ENCODE measurements at regions of chr20 and their contacts with region 1.

Region 1: DNA sequence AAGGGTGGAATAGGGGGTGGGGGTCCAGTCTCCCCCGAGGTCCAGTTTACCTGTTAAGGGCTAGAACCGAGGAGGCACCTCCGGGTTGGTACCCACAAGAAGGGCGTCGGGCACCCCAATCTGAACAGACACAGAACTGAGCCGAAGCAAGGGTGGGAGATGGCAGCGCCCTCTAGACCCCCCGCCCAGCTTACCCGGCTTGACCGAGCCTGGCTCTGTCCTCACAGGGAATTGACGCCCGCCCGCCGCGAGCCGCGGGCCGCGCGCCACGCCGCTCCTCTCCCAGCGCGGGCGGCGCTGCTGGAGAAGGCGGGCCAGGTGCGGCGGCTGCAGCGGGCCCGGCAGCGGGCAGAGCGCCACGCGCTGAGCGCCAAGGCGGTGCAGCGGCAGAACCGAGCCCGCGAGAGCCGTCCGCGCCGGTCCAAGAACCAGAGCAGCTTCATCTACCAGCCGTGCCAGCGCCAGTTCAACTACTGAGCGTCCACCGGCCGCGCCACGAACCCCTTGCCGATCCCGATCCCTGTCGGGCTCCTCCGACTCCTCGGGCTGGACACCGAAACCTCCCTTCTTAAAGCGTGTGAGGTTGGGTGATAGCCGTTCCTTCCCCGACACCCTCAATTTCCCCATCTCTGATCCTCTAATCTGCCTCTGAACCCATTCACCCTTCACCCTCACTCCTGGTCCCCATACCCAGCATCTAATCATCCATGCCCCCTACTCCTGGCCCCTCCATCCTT is 5.9 kb downstream of the TP53INP2 start:
- DNase-seq: no peak
- H3K4me3 ChIP-seq: peak overlapping the region; percentile 39 to 74 (median 55)
- H3K27ac ChIP-seq: no peak overlapping the region
- H3K4me1 ChIP-seq: peaks cover 40% of the 10 kb centered on the region
- H3K27me3 ChIP-seq: no peaks in the 10 kb centered on the region
- CTCF ChIP-seq: peak in 1 of 2 donors; percentile 29

Region 2: GRCh38 chr20:34260208-34260942 is 449.6 kb before region 1 on chr20:
- CTCF ChIA-PET with region 1: no interaction called
- dilution Hi-C with region 1: no loop called
- in situ Hi-C with region 1: no loop called
- intact Hi-C with region 1: loop called (anchors 1 kb)
- DNase-seq: no peak
- H3K4me3 ChIP-seq: no peak overlapping the region
- H3K27ac ChIP-seq: no peak overlapping the region
- H3K4me1 ChIP-seq: no peaks in the 10 kb centered on the region
- H3K27me3 ChIP-seq: no peaks in the 10 kb centered on the region
- CTCF ChIP-seq: no peak

Region 3: GRCh38 chr20:34538671-34539123 is 171.3 kb before region 1 on chr20:
- CTCF ChIA-PET with region 1: no interaction called
- dilution Hi-C with region 1: loop called (anchors 5 kb)
- in situ Hi-C with region 1: no loop called
- intact Hi-C with region 1: loop called (anchors 1 kb)
- DNase-seq: peak; percentile 32
- H3K4me3 ChIP-seq: no peak overlapping the region
- H3K27ac ChIP-seq: no peak overlapping the region
- H3K4me1 ChIP-seq: no peaks in the 10 kb centered on the region
- H3K27me3 ChIP-seq: no peaks in the 10 kb centered on the region
- CTCF ChIP-seq: peak; percentile 86 to 88

Region 4: GRCh38 chr20:34579191-34579978 is 130.6 kb before region 1 on chr20:
- CTCF ChIA-PET with region 1: interaction called, 4 read pairs
- dilution Hi-C with region 1: no loop called
- in situ Hi-C with region 1: loop called (anchors 5 to 10 kb)
- intact Hi-C with region 1: loop called (anchors 1 kb)
- DNase-seq: peak; percentile 94
- H3K4me3 ChIP-seq: no peak overlapping the region
- H3K27ac ChIP-seq: peak overlapping the region; percentile 10
- H3K4me1 ChIP-seq: peaks cover 30% of the 10 kb centered on the region
- H3K27me3 ChIP-seq: no peaks in the 10 kb centered on the region
- CTCF ChIP-seq: peak; percentile 92

Region 5: DNA sequence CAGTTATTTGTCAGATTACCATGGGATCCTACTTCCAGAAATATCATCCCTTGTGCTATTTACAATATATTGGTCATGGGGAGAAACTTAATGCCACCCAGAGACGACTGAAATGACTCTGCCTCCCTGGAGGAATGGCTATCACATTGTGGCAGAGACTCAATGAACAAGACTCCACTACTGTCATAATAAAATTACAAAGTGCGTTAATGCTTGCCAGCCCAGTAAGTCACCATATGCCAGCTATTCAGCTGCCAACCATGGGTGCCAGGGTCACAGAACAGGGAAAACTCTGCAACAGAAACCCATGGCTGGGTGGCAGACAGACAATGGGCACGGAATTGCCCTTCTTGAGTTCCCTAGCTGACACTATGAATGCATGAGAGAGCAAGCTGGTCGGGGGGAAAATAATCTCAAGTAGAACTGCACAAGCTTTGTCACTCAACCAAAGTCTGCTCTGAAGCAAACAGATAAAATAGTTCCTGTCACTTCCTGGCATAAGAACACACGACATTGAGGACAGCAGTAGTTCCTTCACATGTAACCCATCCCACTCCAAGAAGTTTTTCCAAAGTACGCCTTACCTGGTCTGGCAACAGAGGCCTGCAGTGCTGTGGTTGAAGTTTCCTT is 26.2 kb after region 1 on chr20:
- CTCF ChIA-PET with region 1: no interaction called
- dilution Hi-C with region 1: no loop called
- in situ Hi-C with region 1: no loop called
- intact Hi-C with region 1: no loop called
- DNase-seq: no peak
- H3K4me3 ChIP-seq: no peak overlapping the region
- H3K27ac ChIP-seq: no peak overlapping the region
- H3K4me1 ChIP-seq: no peaks in the 10 kb centered on the region
- H3K27me3 ChIP-seq: no peaks in the 10 kb centered on the region
- CTCF ChIP-seq: no peak

Region 6: GRCh38 chr20:34781220-34781619 is 71.2 kb after region 1 on chr20:
- CTCF ChIA-PET with region 1: no interaction called
- dilution Hi-C with region 1: loop called (anchors 5 kb)
- in situ Hi-C with region 1: no loop called
- intact Hi-C with region 1: no loop called
- DNase-seq: no peak
- H3K4me3 ChIP-seq: no peak overlapping the region
- H3K27ac ChIP-seq: no peak overlapping the region
- H3K4me1 ChIP-seq: no peaks in the 10 kb centered on the region
- H3K27me3 ChIP-seq: no peaks in the 10 kb centered on the region
- CTCF ChIP-seq: no peak